Right lobe of liver (tissue), 6 donors: ENCODE measurements at regions of chr13 and their contacts with region 1.

Region 1: GRCh38 chr13:31236211-31236786 is 36.5 kb downstream of the B3GLCT start:
- DNase-seq: no peak
- ATAC-seq: peak; percentile 58 to 65 (median 60)
- H3K4me3 ChIP-seq: no peak overlapping the region
- H3K27ac ChIP-seq: no peak overlapping the region
- H3K4me1 ChIP-seq: no peaks in the 10 kb centered on the region
- H3K27me3 ChIP-seq: no peaks in the 10 kb centered on the region
- CTCF ChIP-seq: peak; percentile 62 to 73 (median 68)
- POLR2A ChIP-seq: no peak

Region 2: GRCh38 chr13:31131470-31131961 is 104.8 kb before region 1 on chr13:
- intact Hi-C with region 1: no loop called
- DNase-seq: no peak
- ATAC-seq: no peak
- H3K4me3 ChIP-seq: no peak overlapping the region
- H3K27ac ChIP-seq: no peak overlapping the region
- H3K4me1 ChIP-seq: no peaks in the 10 kb centered on the region
- H3K27me3 ChIP-seq: no peaks in the 10 kb centered on the region
- CTCF ChIP-seq: no peak
- POLR2A ChIP-seq: no peak

Region 3: DNA sequence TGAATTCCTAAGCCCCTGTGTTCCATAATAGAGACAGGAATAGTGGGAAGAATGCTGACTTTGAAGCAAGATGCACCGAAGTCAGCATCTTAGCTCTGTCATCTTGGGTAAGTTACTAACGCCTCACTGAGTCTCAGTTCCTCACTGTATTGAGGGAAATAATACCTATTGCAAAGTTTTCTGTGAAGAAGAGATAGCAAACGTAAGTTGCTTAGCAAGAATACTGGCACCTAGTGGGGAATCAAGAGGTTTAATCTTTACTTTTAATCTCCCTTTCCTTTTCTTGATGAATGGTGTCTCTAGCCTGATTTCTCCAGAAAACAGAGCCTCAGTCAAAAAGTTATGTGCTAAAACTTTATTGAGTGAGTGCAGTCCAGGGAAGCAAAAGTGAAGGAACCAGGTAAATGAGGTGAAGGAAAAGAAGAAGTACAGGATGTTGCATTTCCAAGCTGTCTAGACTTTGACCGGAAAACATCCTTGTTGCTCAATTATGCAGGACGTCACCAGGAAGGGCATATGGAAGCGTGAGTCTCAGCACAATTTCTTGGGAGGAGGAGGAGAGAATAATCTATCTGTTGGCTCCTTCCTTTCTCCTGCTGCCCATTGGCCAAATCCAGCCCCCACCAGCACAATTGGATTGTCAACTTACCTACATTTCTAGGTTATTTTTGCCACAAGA is 173.5 kb after region 1 on chr13:
- intact Hi-C with region 1: loop called in 1 of 2 experiments (anchors 10 kb)
- DNase-seq: no peak
- ATAC-seq: no peak
- H3K4me3 ChIP-seq: no peak overlapping the region
- H3K27ac ChIP-seq: no peak overlapping the region
- H3K4me1 ChIP-seq: no peaks in the 10 kb centered on the region
- H3K27me3 ChIP-seq: peaks cover 0 to 3% of the 10 kb centered on the region in 2 donors
- CTCF ChIP-seq: no peak
- POLR2A ChIP-seq: no peak

Region 4: DNA sequence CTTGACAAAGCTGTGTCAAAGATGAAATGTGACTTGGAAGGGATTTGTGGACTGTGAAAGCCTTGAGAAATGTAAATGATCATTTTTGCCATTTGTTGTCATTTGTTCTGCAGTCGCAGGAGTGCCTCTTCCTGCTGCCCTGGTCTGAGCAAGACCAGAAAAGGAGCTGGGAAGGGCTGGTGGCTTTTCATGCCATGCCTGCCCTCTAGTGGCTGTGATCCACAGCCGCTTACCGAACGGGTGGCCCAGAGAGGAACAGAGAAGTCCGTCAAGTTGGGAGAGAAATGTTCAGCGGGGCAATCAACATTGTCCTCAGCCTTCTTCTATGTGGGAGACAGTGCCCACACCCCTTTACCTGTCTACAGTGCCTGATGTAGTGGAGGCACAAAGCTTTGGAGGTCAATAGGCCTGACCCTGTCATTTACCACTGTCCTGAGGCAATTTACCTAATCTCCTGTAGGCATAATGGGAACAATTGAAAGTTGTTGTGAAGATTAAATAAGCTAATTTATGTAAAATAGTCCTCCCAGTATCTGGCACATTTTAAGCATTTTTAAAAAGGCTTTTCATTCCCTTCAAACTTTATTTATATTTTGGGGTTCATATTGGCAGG is 187.9 kb after region 1 on chr13:
- intact Hi-C with region 1: loop called (anchors 10 kb)
- DNase-seq: peak; percentile 74 to 79 (median 78)
- ATAC-seq: peak; percentile 99 to 100 (median 99)
- H3K4me3 ChIP-seq: no peak overlapping the region
- H3K27ac ChIP-seq: no peak overlapping the region
- H3K4me1 ChIP-seq: no peaks in the 10 kb centered on the region
- H3K27me3 ChIP-seq: no peaks in the 10 kb centered on the region
- CTCF ChIP-seq: peak; percentile 70 to 90 (median 88)
- POLR2A ChIP-seq: no peak